ENCODE measurements at regions of chr11 and their contacts with region 1.

Region 1: GRCh38 chr11:326842-327580 is 6.4 kb upstream of the IFITM3 start:
- DNase-seq: peak; percentile 70
- H3K4me3 Mint-ChIP-seq: peak overlapping the region; percentile 32
- H3K27ac Mint-ChIP-seq: peak overlapping the region; percentile 75
- H3K4me1 Mint-ChIP-seq: peaks cover 64% of the 10 kb centered on the region
- H3K27me3 Mint-ChIP-seq: no peaks in the 10 kb centered on the region

Region 2: GRCh38 chr11:340539-341512 is 13.8 kb after region 1 on chr11:
- CTCF ChIA-PET with region 1: interaction called, 16 read pairs
- POLR2A ChIA-PET with region 1: interaction called, 7 read pairs
- DNase-seq: no peak
- H3K4me3 Mint-ChIP-seq: no peak overlapping the region
- H3K27ac Mint-ChIP-seq: no peak overlapping the region
- H3K4me1 Mint-ChIP-seq: peaks cover 16% of the 10 kb centered on the region
- H3K27me3 Mint-ChIP-seq: peaks cover 23% of the 10 kb centered on the region

Region 3: GRCh38 chr11:355581-356458 is 28.8 kb after region 1 on chr11:
- CTCF ChIA-PET with region 1: interaction called, 5 read pairs
- POLR2A ChIA-PET with region 1: interaction called, 11 read pairs
- DNase-seq: peak; percentile 89
- H3K4me3 Mint-ChIP-seq: peak overlapping the region; percentile 88
- H3K27ac Mint-ChIP-seq: peak overlapping the region; percentile 95
- H3K4me1 Mint-ChIP-seq: peaks cover 41% of the 10 kb centered on the region
- H3K27me3 Mint-ChIP-seq: peaks cover 12% of the 10 kb centered on the region

Region 4: GRCh38 chr11:373716-374551 is 46.9 kb after region 1 on chr11:
- CTCF ChIA-PET with region 1: no interaction called
- POLR2A ChIA-PET with region 1: no interaction called
- DNase-seq: no peak
- H3K4me3 Mint-ChIP-seq: no peak overlapping the region
- H3K27ac Mint-ChIP-seq: peak overlapping the region; percentile 26
- H3K4me1 Mint-ChIP-seq: peaks cover 3% of the 10 kb centered on the region
- H3K27me3 Mint-ChIP-seq: peaks cover 19% of the 10 kb centered on the region

Region 5: DNA sequence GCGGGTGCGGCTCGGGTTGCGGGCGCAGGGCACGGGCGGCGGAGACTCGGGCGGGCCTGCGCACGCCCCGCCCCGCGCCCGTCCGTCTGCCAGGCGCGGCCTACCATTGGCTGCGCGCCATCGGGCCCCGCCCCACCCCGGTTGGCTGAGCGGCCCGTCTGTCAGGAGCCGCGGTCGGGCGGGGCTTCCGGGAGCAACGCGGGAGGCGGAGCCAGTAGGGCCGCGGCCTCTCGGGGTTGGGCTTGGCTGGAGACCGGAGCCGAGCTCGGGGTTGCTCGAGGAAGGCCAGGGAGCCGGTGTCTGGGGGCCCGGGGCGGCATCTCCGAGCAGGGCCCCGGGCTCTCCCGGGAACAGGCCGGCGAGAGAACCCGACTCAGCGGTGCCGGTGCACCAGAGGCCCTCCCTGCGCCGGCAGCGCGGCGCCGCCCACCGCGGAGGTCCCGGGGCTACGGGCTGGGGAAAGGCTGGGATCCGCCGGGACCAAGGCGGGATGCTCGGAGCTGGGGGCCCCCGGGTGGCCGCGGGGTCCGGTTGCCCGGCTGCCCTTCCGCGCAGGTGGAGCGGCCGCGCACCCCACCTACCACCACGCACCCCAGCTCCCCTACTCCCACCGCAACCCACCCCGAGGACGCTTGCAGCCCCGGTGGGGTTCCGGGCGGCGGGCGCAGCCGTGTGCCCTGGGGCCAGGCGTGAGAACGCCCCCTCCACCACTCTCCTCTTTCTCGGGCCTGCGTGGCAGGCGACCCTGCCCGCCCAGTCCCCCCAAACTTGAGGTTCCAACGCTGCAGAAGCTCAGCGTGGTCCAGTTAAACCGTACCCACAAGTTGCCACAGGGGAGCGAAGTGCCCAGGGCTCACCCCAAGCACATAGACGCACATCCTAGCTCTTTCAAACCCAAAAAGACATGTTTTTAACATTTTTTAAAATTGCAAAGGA is 208.8 kb after region 1 on chr11 and contains the start of gene HRAS:
- CTCF ChIA-PET with region 1: no interaction called
- POLR2A ChIA-PET with region 1: no interaction called
- DNase-seq: peak; percentile 96
- H3K4me3 Mint-ChIP-seq: peak within 1 kb of the TSS; percentile 84
- H3K27ac Mint-ChIP-seq: peak within 1 kb of the TSS; percentile 90
- H3K4me1 Mint-ChIP-seq: peaks cover 28% of the 10 kb centered on the region
- H3K27me3 Mint-ChIP-seq: no peaks in the 10 kb centered on the region
- total RNA-seq, gene HRAS: 45.1 to 52.5 TPM